ENCODE measurements at regions of chr5 and their contacts with region 1.

Region 1: GRCh38 chr5:67209142-67209771 is 12.7 kb upstream of the CD180 start:
- H3K4me3 Mint-ChIP-seq: no peak overlapping the region
- H3K27ac Mint-ChIP-seq: no peak overlapping the region
- H3K4me1 Mint-ChIP-seq: peaks cover 61% of the 10 kb centered on the region
- H3K27me3 Mint-ChIP-seq: no peaks in the 10 kb centered on the region

Region 2: GRCh38 chr5:66570201-66570600 is 639.1 kb before region 1 on chr5:
- intact Hi-C with region 1: no loop called
- H3K4me3 Mint-ChIP-seq: no peak overlapping the region
- H3K27ac Mint-ChIP-seq: no peak overlapping the region
- H3K4me1 Mint-ChIP-seq: no peaks in the 10 kb centered on the region
- H3K27me3 Mint-ChIP-seq: no peaks in the 10 kb centered on the region

Region 3: DNA sequence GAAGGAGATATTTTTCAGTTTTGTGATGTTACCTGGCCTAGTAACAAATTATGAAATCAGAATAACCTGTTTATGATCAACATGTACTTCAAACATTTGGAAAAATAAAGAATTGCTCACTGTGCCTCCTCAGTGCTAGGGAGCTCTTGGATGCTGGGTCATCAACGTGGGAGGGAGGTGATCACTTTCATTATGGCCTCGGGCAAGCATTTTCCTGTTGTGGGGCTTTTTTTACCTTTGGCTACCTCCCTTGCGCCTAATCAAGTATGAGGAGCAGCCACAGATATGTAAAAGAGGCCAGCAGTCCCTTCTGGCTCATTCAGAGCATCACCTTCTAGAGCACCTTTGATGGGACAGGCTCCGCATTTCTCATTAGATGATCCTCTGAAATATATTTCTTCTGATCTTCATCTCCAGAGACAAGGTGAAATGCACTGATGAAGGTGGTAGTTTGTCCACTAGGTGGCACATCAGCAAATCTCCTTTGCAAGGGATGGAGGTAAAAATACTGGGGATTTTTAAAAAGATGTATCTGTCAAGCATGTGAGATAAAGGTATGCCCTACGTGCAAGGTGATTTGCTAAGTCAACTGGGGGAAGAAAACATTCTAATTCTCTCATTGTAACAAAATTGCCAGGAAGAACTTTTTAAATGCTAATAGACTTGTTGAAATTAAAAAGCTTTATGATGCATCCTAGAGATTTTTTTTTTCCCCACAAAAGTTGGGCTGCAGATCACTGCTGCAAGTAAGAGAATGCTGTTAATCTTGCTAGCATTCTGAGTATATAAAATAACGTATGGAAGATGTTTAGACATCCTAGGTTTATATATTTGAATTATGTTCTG is 394.9 kb before region 1 on chr5:
- intact Hi-C with region 1: loop called (anchors 10 kb)
- H3K4me3 Mint-ChIP-seq: no peak overlapping the region
- H3K27ac Mint-ChIP-seq: no peak overlapping the region
- H3K4me1 Mint-ChIP-seq: peaks cover 13% of the 10 kb centered on the region
- H3K27me3 Mint-ChIP-seq: peaks cover 11% of the 10 kb centered on the region

Region 4: GRCh38 chr5:66987949-66988838 is 221.1 kb before region 1 on chr5:
- intact Hi-C with region 1: loop called (anchors 10 kb)
- H3K4me3 Mint-ChIP-seq: no peak overlapping the region
- H3K27ac Mint-ChIP-seq: no peak overlapping the region
- H3K4me1 Mint-ChIP-seq: peaks cover 8% of the 10 kb centered on the region
- H3K27me3 Mint-ChIP-seq: peaks cover 2% of the 10 kb centered on the region

Region 5: DNA sequence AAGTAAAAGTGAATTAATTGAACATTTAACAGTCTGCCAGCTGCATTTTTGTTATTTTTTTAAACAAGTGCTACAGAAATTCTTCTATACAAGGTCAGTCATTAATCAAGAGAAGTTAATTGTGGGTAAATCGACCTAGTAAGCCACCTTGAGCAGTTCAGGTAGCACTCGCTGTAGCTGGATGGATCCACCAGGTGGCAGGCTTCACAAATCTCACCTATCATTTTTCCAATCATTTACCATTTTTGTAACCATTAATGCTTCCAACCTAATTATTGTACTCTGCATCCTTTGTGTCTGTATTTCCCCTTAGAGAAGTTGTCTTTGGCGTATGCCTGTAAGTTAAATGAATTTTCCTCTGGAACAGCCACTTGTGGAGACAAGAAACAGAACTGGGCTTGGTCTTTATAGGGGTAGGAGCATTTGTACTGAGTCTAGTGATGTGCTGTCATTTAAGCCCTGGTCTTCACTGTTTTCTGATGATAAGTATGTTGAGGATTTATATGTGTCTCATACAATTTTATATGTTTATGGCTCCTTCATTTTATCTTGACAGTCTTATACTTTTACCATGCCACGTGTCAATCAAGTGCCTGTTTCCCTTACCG is 52.2 kb before region 1 on chr5:
- intact Hi-C with region 1: loop called (anchors 1 kb)
- H3K4me3 Mint-ChIP-seq: no peak overlapping the region
- H3K27ac Mint-ChIP-seq: no peak overlapping the region
- H3K4me1 Mint-ChIP-seq: peaks cover 23% of the 10 kb centered on the region
- H3K27me3 Mint-ChIP-seq: no peaks in the 10 kb centered on the region

Region 6: DNA sequence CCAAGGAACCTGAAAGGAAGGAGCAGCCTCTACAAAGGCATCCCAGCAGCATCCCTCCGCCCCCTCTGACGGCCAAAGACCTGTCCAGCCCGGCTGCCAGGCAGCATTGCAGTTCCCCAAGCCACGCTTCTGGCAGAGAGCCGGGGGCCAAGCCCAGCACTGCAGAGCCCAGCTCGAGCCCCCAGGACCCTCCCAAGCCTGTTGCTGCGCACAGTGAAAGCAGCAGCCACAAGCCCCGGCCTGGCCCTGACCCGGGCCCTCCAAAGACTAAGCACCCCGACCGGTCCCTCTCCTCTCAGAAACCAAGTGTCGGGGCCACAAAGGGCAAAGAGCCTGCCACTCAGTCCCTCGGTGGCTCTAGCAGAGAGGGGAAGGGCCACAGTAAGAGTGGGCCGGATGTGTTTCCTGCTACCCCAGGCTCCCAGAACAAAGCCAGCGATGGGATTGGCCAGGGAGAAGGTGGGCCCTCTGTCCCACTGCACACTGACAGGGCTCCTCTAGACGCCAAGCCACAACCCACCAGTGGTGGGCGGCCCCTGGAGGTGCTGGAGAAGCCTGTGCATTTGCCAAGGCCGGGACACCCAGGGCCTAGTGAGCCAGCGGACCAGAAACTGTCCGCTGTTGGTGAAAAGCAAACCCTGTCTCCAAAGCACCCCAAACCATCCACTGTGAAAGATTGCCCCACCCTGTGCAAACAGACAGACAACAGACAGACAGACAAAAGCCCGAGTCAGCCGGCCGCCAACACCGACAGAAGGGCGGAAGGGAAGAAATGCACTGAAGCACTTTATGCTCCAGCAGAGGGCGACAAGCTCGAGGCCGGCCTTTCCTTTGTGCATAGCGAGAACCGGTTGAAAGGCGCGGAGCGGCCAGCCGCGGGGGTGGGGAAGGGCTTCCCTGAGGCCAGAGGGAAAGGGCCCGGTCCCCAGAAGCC is 43.5 kb before region 1 on chr5:
- intact Hi-C with region 1: loop called (anchors 1 kb)
- H3K4me3 Mint-ChIP-seq: peak overlapping the region; percentile 77
- H3K27ac Mint-ChIP-seq: peak overlapping the region; percentile 95
- H3K4me1 Mint-ChIP-seq: peaks cover 56% of the 10 kb centered on the region
- H3K27me3 Mint-ChIP-seq: no peaks in the 10 kb centered on the region

Measured in dendritic cell treated with granulocyte-macrophage colony-stimulating factor and Interleukin-4, amounts not matched to agents 40 ng/mL and 50 ng/mL, for 4 days (primary cell).